Activated CD8-positive, alpha-beta T cell treated with anti-CD3 and anti-CD28 coated beads for 36 hours (primary cell): ENCODE measurements at regions of chr1 and their contacts with region 1.

Region 1: DNA sequence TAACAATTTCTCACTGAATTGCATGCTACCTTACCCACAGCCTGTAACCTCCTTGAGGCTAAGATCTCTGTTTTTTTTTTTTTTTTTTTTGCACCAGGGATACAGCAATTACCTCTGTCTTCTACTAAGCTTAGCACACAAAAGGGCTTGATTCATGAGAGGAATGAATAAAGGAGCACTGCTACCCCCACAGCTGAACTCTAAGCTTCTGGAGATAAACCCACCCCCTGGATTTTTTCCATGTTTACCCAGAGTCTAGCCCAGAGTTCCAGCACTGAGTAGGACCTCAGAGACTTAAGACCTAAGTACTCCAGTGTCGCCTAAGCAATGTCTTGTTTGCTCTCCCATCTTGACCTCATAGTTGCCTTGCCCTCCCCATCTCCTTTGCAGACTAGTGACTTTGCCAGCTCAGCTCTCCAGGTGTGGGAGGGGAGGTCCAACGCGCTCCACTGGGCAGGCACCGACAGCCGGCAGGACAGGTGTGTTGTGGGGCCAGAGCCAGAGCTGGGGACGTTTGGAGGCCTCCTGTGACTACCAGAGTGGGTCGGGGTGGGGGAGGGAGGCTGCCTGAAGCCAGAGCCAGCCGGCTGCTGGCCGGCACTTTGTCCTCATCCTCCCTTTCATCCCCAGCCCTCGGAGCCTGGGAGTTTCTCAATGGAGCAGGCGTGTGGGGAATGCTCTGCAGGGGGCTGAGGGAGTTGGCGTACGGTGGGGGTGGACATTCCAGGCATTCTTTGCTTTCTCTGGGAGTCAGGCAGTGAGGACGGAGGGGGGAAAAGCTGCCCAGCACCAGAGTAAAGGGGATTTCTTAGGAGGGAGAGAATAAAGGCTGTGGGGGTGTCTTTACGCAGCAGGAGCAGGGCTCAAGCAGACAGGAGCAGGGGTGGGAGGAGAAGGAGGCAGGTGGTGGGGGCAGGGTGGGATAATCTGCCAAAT is 20.4 kb downstream of the NUAK2 start:
- DNase-seq: no peak
- ATAC-seq: no peak
- H3K4me3 Mint-ChIP-seq: no peak overlapping the region
- H3K27ac Mint-ChIP-seq: no peak overlapping the region
- H3K4me1 Mint-ChIP-seq: peaks cover 40% of the 10 kb centered on the region
- H3K27me3 Mint-ChIP-seq: no peaks in the 10 kb centered on the region
- CTCF ChIP-seq: no peak

Region 2: DNA sequence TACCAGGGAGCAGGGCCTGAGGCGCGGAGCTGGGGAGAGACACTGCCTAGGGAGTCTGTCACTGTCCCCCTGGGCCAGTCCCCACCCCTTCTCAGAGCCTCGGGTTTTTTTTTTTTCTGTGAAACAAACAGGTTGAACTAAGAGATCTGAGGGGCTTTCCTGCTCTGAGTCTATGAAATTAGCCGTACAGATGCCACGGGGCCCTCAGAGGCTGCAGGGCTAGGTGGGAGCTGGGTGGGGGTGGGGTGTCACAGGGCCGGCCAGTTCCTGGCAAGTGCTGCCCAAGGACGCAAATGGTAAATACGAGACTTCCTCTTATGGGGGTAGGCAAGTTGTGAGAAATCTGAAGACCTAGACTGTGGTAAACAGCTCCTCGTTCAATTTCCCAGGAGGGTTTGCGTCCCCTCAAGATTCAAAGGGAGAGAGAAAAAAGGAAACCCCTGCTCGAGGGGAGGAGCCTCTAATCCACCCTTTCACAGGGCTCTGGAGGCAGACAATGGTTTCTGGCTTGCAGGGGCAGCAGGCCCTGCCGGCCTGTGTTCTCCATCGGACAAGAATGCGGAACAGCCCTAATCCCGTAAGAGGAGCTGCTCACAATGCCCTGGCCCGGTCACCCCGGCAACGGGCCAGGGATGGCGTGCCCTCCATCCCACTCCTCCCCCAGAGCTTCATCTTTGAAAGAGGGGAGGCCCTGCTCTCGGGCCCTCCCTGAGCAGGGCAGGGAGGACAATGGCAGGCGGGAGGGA is 12.6 kb after region 1 on chr1:
- CTCF ChIA-PET with region 1: interaction called, 5 read pairs
- POLR2A ChIA-PET with region 1: interaction called, 10 read pairs
- intact Hi-C with region 1: loop called (anchors 1 kb)
- DNase-seq: peak; percentile 86
- ATAC-seq: peak; percentile 88
- H3K4me3 Mint-ChIP-seq: peak overlapping the region; percentile 81
- H3K27ac Mint-ChIP-seq: peak overlapping the region; percentile 98
- H3K4me1 Mint-ChIP-seq: peaks cover 87% of the 10 kb centered on the region
- H3K27me3 Mint-ChIP-seq: no peaks in the 10 kb centered on the region
- CTCF ChIP-seq: no peak

Region 3: GRCh38 chr1:205359771-205360565 is 58.8 kb after region 1 on chr1:
- CTCF ChIA-PET with region 1: no interaction called
- POLR2A ChIA-PET with region 1: no interaction called
- intact Hi-C with region 1: no loop called
- DNase-seq: no peak
- ATAC-seq: no peak
- H3K4me3 Mint-ChIP-seq: no peak overlapping the region
- H3K27ac Mint-ChIP-seq: no peak overlapping the region
- H3K4me1 Mint-ChIP-seq: no peaks in the 10 kb centered on the region
- H3K27me3 Mint-ChIP-seq: peaks cover 4% of the 10 kb centered on the region
- CTCF ChIP-seq: no peak

Region 4: GRCh38 chr1:205375835-205376545 is 74.8 kb after region 1 on chr1:
- CTCF ChIA-PET with region 1: no interaction called
- POLR2A ChIA-PET with region 1: no interaction called
- intact Hi-C with region 1: no loop called
- DNase-seq: no peak
- ATAC-seq: no peak
- H3K4me3 Mint-ChIP-seq: no peak overlapping the region
- H3K27ac Mint-ChIP-seq: no peak overlapping the region
- H3K4me1 Mint-ChIP-seq: peaks cover 11% of the 10 kb centered on the region
- H3K27me3 Mint-ChIP-seq: peaks cover 18% of the 10 kb centered on the region
- CTCF ChIP-seq: no peak